ENCODE measurements at regions of chr7 and their contacts with region 1.

Region 1: GRCh38 chr7:157652161-157652953 is 315.6 kb downstream of the DNAJB6 start:
- DNase-seq: no peak
- H3K4me3 ChIP-seq: no peak overlapping the region
- H3K4me3 Mint-ChIP-seq: no peak overlapping the region
- H3K27ac Mint-ChIP-seq: no peak overlapping the region
- H3K4me1 ChIP-seq: no peaks in the 10 kb centered on the region
- H3K4me1 Mint-ChIP-seq: no peaks in the 10 kb centered on the region
- H3K27me3 ChIP-seq: no peaks in the 10 kb centered on the region
- H3K27me3 Mint-ChIP-seq: no peaks in the 10 kb centered on the region
- CTCF ChIP-seq: no peak

Region 2: DNA sequence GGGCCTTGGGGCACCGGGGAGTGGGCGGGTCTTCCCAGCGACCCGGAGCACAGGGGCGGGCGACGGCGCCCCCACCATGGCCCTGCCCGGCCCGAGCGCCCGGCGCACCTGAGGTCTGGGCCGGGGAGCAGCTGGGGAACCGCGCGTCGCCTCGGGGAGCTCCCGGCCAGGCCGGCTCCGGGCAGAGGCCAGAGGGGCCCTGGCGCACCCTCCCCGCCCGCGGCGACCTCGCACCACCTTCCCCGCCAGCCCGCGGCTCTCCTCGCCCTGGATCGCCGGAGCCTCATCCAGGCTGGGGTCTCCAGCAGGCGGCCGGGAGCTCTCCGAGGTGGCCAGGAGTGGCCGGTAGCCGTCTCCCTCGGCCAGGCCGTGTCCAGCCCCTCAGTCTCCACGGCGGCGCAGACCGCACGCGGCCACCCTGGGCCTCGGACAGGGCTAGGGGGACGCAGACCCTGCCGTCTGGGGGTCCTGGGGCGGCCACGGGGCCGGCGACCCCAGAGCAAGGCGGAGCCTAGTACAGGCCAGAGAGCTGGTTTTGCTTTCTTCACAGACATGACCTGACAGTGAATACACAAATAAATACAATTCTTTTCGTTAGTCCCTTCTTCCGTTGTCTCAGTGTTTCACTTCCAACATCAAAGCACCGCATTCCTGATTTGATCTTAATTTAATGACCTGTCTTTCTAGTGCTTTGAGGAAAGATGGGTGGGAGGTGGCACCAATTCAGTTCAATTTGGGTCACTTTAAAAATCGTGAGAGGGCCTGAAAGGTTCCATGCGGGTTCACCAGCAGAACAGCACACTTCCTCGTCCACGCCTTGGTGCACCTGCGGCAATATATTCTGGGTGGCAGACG is 41.4 kb after region 1 on chr7:
- CTCF ChIA-PET with region 1: no interaction called
- POLR2A ChIA-PET with region 1: no interaction called
- intact Hi-C with region 1: loop called (anchors 2 kb)
- DNase-seq: no peak
- H3K4me3 ChIP-seq: no peak overlapping the region
- H3K4me3 Mint-ChIP-seq: no peak overlapping the region
- H3K27ac Mint-ChIP-seq: no peak overlapping the region
- H3K4me1 ChIP-seq: peaks cover 3% of the 10 kb centered on the region; the same call in 1 of the 2 replicates
- H3K4me1 Mint-ChIP-seq: no peaks in the 10 kb centered on the region
- H3K27me3 ChIP-seq: no peaks in the 10 kb centered on the region
- H3K27me3 Mint-ChIP-seq: no peaks in the 10 kb centered on the region
- CTCF ChIP-seq: no peak

Measured in Caco-2 (cell line).